K562 (cell line): ENCODE measurements at regions of chr5 and their contacts with region 1.

Region 1: GRCh38 chr5:96601811-96602244 is 60.3 kb upstream of the CAST start:
- DNase-seq: peak; percentile 60 to 75 (median 66)
- ATAC-seq: peak; percentile 89
- H3K4me3 ChIP-seq: no peak overlapping the region
- H3K27ac ChIP-seq: no peak overlapping the region
- H3K4me1 ChIP-seq: no peaks in the 10 kb centered on the region
- H3K27me3 ChIP-seq: no peaks in the 10 kb centered on the region; a peak in 1 of 5 replicates
- CTCF ChIP-seq: peak; percentile 66 to 72 (median 69)
- EP300 ChIP-seq: no peak
- POLR2A ChIP-seq: no peak
- RAD21 ChIP-seq: peak; percentile 63 to 81

Region 2: DNA sequence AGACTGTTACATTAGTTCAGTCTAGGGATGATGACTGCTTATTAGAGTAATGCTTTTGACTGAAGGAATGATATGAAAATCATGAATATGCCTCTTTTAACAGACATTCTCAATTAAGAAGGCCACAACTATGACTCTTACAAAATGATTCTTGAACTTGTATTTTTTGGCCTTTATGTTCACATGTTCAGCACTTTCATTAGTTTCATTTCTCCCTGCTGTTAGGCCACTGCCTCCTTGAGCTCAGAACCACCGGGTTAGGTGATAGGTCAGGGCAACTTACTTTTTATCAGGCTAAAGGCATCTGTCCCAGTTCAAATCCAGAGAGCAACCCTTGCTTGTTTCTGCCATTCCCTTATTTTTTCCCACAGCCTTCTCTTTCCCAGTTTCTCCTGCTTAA is 404.9 kb before region 1 on chr5:
- CTCF ChIA-PET with region 1: no interaction called
- POLR2A ChIA-PET with region 1: no interaction called
- in situ Hi-C with region 1: no loop called
- intact Hi-C with region 1: no loop called
- DNase-seq: no peak
- ATAC-seq: no peak
- H3K4me3 ChIP-seq: no peak overlapping the region
- H3K27ac ChIP-seq: no peak overlapping the region
- H3K4me1 ChIP-seq: no peaks in the 10 kb centered on the region
- H3K27me3 ChIP-seq: no peaks in the 10 kb centered on the region
- CTCF ChIP-seq: no peak
- EP300 ChIP-seq: no peak
- POLR2A ChIP-seq: no peak
- RAD21 ChIP-seq: no peak

Region 3: GRCh38 chr5:96344678-96345577 is 256.9 kb before region 1 on chr5:
- CTCF ChIA-PET with region 1: interaction called, 5 read pairs
- POLR2A ChIA-PET with region 1: no interaction called
- in situ Hi-C with region 1: loop called (anchors 10 kb)
- intact Hi-C with region 1: loop called (anchors 1 kb)
- DNase-seq: peak; percentile 17 to 45 (median 29)
- ATAC-seq: peak; percentile 85
- H3K4me3 ChIP-seq: no peak overlapping the region
- H3K27ac ChIP-seq: no peak overlapping the region
- H3K4me1 ChIP-seq: no peaks in the 10 kb centered on the region; a peak in 1 of 5 replicates
- H3K27me3 ChIP-seq: no peaks in the 10 kb centered on the region; a peak in 1 of 5 replicates
- CTCF ChIP-seq: peak; percentile 36 to 70 (median 50); a peak in 4 of 6 replicates
- EP300 ChIP-seq: no peak
- POLR2A ChIP-seq: no peak
- RAD21 ChIP-seq: peak; percentile 80 to 85

Region 4: GRCh38 chr5:96562614-96563013 is 39.2 kb before region 1 on chr5:
- CTCF ChIA-PET with region 1: no interaction called
- POLR2A ChIA-PET with region 1: no interaction called
- in situ Hi-C with region 1: no loop called
- intact Hi-C with region 1: no loop called
- DNase-seq: no peak
- ATAC-seq: no peak
- H3K4me3 ChIP-seq: no peak overlapping the region
- H3K27ac ChIP-seq: no peak overlapping the region
- H3K4me1 ChIP-seq: no peaks in the 10 kb centered on the region
- H3K27me3 ChIP-seq: peaks cover 0 to 2% of the 10 kb centered on the region in 2 experiments; a peak in 2 of 5 replicates
- CTCF ChIP-seq: no peak
- EP300 ChIP-seq: no peak
- POLR2A ChIP-seq: no peak
- RAD21 ChIP-seq: no peak

Region 5: DNA sequence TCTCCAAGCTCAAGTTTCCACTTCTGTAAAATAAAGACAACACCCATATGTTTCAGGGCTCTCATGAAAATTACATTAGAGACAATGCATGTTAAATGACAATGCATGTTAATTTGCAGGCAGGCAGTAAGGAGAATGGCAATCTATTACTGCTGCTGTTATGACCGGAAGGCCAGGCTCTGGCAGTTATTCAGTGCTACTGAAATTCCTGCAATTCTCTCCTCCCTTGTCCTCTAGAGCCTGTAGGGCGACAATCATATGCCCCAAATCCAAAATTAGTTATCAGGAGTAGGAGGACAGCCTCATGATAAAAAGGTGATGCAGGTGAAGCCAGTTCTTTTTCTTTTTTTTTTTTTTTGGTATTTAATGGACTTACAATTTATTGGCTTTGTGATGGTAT is 18.1 kb after region 1 on chr5:
- CTCF ChIA-PET with region 1: no interaction called
- POLR2A ChIA-PET with region 1: no interaction called
- in situ Hi-C with region 1: no loop called
- intact Hi-C with region 1: no loop called
- DNase-seq: no peak
- ATAC-seq: no peak
- H3K4me3 ChIP-seq: no peak overlapping the region
- H3K27ac ChIP-seq: no peak overlapping the region
- H3K4me1 ChIP-seq: no peaks in the 10 kb centered on the region
- H3K27me3 ChIP-seq: no peaks in the 10 kb centered on the region
- CTCF ChIP-seq: no peak
- EP300 ChIP-seq: no peak
- POLR2A ChIP-seq: no peak
- RAD21 ChIP-seq: no peak